ENCODE measurements at regions of chr12 and their contacts with region 1.

Region 1: DNA sequence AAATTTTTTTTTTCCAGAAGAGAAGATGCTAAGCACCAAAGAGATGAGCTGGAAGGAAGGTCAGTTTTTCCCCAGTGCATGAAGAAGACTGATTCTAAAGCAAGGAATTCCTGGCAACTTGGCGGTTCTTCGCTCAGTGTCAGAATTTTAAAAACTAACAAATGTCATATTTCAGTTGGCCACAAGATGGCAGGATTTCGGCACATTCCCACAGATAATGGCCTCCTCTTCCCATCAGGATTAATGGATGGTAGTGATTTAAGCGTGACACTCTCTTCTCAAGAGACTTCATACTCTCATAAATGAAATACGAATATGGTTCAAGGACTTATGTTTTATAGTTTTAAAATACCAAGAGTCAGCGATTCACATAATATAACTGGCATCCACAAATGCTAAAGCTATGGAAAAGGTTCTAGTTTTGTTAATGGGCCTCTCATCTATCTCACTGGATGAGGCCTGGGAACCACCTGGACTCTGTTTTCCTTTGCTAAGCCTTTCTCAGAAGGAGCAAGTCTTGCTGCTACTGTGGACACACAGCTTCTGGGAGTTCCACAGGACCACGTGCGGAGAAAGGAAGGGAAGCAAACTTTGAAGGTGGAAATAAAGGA is 46.1 kb upstream of the PTPRO start:
- DNase-seq: no peak
- H3K4me3 ChIP-seq: no peak overlapping the region
- H3K27ac ChIP-seq: no peak overlapping the region
- H3K4me1 ChIP-seq: no peaks in the 10 kb centered on the region
- H3K27me3 ChIP-seq: no peaks in the 10 kb centered on the region
- CTCF ChIP-seq: peak in 2 of 3 experiments; percentile 67 to 71; a peak in 3 of 4 replicates
- EP300 ChIP-seq: no peak
- POLR2A ChIP-seq: no peak
- RAD21 ChIP-seq: peak; percentile 81 to 84

Region 2: DNA sequence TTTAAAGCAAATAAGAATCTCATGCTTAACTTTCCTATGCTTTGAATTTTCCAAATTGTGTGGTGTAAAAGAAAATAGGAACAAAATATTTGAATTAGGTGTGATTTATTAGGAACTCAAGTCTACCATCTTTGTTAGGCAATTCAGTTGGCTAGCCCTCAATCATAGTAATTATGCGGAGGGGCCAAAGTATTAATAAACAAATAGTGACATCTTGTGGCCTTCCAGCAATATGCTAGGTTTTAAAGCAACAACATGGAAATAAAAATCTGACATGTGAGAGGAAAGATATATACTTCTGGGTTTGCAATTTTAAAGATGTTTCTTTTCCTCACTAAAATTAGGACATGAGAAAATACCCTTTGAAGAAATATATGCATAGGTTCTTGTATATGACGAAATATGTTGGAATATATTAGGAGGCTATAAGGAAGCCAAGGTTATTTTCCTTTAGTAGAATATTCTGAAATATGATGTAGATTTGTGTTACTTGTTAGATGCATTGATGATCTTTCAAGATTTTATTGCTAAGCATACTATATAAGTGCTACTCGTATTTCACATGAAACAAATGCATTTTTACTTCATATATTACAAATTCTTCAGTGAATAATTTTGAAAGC is 246.5 kb after region 1 on chr12:
- CTCF ChIA-PET with region 1: interaction called, 37 read pairs
- POLR2A ChIA-PET with region 1: no interaction called
- DNase-seq: no peak
- H3K4me3 ChIP-seq: no peak overlapping the region
- H3K27ac ChIP-seq: no peak overlapping the region
- H3K4me1 ChIP-seq: no peaks in the 10 kb centered on the region
- H3K27me3 ChIP-seq: no peaks in the 10 kb centered on the region
- CTCF ChIP-seq: peak in 2 of 3 experiments; percentile 44 to 53; a peak in 2 of 4 replicates
- EP300 ChIP-seq: no peak
- POLR2A ChIP-seq: no peak
- RAD21 ChIP-seq: peak; percentile 83 to 86

Measured in H1 (cell line).